Breast epithelium (tissue), 4 donors: ENCODE measurements at regions of chr4 and their contacts with region 1.

Region 1: DNA sequence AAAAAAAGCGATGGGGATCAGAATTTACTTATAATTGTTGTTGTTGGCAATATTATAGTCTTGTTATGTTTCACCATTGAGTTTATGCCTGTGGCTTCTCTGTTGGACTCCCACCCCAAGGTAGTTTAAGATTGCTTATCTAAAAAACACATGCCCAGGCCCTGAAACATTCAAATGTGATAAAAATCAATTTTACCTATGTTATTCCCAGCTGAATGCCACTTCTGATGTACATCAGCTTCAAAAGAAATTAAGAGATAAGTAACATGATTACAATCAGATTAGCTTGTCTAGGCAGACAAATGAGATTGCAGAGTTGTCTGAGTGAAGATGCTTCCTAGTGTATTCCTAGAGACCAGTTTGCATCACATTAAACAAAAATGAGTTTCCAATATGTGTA is 484.7 kb downstream of the PCDH7 start:
- DNase-seq: no peak
- H3K4me3 ChIP-seq: no peak overlapping the region
- H3K27ac ChIP-seq: no peak overlapping the region
- H3K4me1 ChIP-seq: no peaks in the 10 kb centered on the region
- H3K27me3 ChIP-seq: no peaks in the 10 kb centered on the region
- CTCF ChIP-seq: no peak
- POLR2A ChIP-seq: no peak

Region 2: GRCh38 chr4:31246856-31247255 is 42.0 kb after region 1 on chr4:
- intact Hi-C with region 1: loop called (anchors 2 kb)
- DNase-seq: no peak
- H3K4me3 ChIP-seq: no peak overlapping the region
- H3K27ac ChIP-seq: no peak overlapping the region
- H3K4me1 ChIP-seq: no peaks in the 10 kb centered on the region
- H3K27me3 ChIP-seq: no peaks in the 10 kb centered on the region
- CTCF ChIP-seq: no peak
- POLR2A ChIP-seq: no peak